Gastrocnemius medialis (tissue), 4 donors: ENCODE measurements at regions of chr22 and their contacts with region 1.

Region 1: DNA sequence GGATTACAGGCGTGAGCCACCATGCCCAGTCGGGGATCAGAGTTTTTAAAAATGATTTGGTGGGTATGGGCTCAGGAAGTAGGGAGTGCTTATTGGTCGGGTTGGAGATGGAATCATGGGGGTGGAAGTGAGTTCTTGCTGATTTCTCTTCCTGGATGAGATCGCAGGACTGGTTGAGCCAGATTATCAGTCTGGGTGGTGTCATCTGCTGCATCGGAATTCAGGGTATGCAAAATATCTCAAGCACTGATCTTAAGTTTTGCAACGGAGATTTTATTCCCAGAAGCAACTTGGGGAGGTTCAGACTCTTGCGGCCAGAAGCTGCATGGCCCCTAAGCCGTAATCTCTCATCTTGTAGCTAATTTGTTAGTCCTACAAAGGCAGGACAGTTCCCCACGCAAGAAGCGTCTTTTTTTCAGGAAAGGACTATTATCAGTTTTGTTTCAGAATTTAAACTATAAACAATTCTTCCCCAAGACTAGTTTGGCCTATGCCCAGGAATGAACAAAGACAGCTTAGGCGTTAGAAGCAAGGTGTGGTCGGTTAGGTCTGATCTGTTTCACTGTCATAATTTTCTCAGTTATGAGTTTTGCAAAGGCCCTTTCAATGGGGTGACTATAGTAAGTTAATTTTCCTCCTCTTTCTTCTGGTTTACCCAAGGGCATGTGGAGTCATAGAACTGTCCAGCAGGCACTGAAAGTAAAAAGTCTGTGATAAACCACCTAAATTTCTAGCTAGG is 1.4 kb upstream of the PIWIL3 start:
- DNase-seq: no peak
- ATAC-seq: no peak
- H3K4me3 ChIP-seq: no peak overlapping the region
- H3K27ac ChIP-seq: no peak overlapping the region
- H3K4me1 ChIP-seq: no peaks in the 10 kb centered on the region
- H3K27me3 ChIP-seq: peaks cover 0 to 5% (median 3%) of the 10 kb centered on the region in 3 donors
- CTCF ChIP-seq: no peak
- POLR2A ChIP-seq: no peak

Region 2: GRCh38 chr22:24525416-24526037 is 250.4 kb before region 1 on chr22:
- in situ Hi-C with region 1: no loop called
- intact Hi-C with region 1: no loop called
- DNase-seq: peak; percentile 44 to 69
- ATAC-seq: peak; percentile 59 to 87
- H3K4me3 ChIP-seq: no peak overlapping the region
- H3K27ac ChIP-seq: no peak overlapping the region
- H3K4me1 ChIP-seq: peaks cover 4 to 7% of the 10 kb centered on the region in 2 donors
- H3K27me3 ChIP-seq: no peaks in the 10 kb centered on the region
- CTCF ChIP-seq: peak; percentile 68 to 81 (median 75)
- POLR2A ChIP-seq: no peak

Region 3: DNA sequence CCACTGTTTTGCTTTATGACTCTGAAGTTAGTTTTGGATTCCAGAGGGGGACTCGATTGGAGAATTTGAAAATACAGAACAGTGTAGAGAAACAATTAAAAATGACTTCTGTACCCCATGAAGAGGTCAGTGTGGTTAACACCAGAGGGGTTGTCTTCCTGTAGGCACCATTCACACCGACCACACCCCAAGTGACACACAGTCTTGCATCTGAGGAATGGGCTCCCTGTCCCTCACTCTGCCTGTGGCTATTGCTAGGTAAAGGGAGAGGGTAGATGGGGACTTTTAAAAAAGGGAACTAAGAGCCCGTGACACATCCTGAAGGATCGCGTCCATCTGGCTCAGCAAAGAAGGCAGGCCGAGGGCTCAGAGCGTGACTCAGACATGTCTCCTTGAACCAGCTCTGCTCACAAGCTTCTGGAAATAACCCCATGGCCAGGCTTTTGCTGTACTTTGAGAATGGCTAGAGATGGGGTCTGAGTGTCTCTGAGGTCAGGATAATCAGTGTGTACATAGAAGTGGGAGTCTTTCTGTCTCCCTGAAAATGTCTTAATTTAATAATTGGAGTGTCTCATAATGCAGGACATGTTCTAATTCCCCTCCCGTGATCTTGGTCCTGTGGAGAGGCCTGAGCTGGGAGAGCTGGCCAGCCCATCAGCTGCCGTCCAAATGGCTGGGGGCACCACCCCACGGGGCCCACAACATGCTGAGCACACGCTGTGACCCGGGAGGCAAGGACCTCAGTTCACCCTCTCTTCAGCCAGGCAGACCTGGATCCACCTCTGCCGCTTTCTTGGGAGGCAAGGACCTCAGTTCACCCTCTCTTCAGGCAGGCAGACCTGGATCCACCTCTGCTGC is 69.3 kb after region 1 on chr22:
- in situ Hi-C with region 1: loop called in 1 of 4 experiments (anchors 5 kb)
- intact Hi-C with region 1: no loop called
- DNase-seq: peak; percentile 11 to 33
- ATAC-seq: peak; percentile 46 to 83
- H3K4me3 ChIP-seq: no peak overlapping the region
- H3K27ac ChIP-seq: no peak overlapping the region
- H3K4me1 ChIP-seq: no peaks in the 10 kb centered on the region
- H3K27me3 ChIP-seq: peaks cover 0 to 3% (median 0%) of the 10 kb centered on the region in 3 donors
- CTCF ChIP-seq: no peak
- POLR2A ChIP-seq: no peak